ENCODE measurements at regions of chr14 and their contacts with region 1.

Region 1: GRCh38 chr14:84882830-84883229 is 647.1 kb upstream of the FLRT2 start:
- DNase-seq: no peak
- H3K4me3 ChIP-seq: no peak overlapping the region
- H3K27ac ChIP-seq: no peak overlapping the region
- H3K27me3 ChIP-seq: no peaks in the 10 kb centered on the region
- CTCF ChIP-seq: no peak

Region 2: GRCh38 chr14:84323978-84324377 is 558.9 kb before region 1 on chr14:
- CTCF ChIA-PET with region 1: no interaction called
- POLR2A ChIA-PET with region 1: interaction called, 12 read pairs
- DNase-seq: no peak
- H3K4me3 ChIP-seq: no peak overlapping the region
- H3K27ac ChIP-seq: no peak overlapping the region
- H3K27me3 ChIP-seq: no peaks in the 10 kb centered on the region
- CTCF ChIP-seq: no peak